Tibial artery (tissue), 4 donors: ENCODE measurements at regions of chr2 and their contacts with region 1.

Region 1: GRCh38 chr2:37920570-37920969 is 4.5 kb upstream of the RMDN2 start:
- DNase-seq: no peak
- H3K4me3 ChIP-seq: no peak overlapping the region
- H3K27ac ChIP-seq: no peak overlapping the region
- H3K4me1 ChIP-seq: peaks cover 0 to 17% (median 3%) of the 10 kb centered on the region in 4 donors
- H3K27me3 ChIP-seq: no peaks in the 10 kb centered on the region
- CTCF ChIP-seq: no peak

Region 2: GRCh38 chr2:37529830-37530415 is 390.6 kb before region 1 on chr2:
- intact Hi-C with region 1: no loop called
- DNase-seq: no peak
- H3K4me3 ChIP-seq: no peak overlapping the region
- H3K27ac ChIP-seq: no peak overlapping the region
- H3K4me1 ChIP-seq: peaks cover 0 to 13% (median 5%) of the 10 kb centered on the region in 4 donors
- H3K27me3 ChIP-seq: no peaks in the 10 kb centered on the region
- CTCF ChIP-seq: no peak

Region 3: GRCh38 chr2:37767956-37768925 is 152.3 kb before region 1 on chr2:
- intact Hi-C with region 1: no loop called
- DNase-seq: peak; percentile 70 to 74
- H3K4me3 ChIP-seq: no peak overlapping the region
- H3K27ac ChIP-seq: peak overlapping the region; percentile 74 to 85
- H3K4me1 ChIP-seq: peaks cover 0 to 51% (median 16%) of the 10 kb centered on the region in 4 donors
- H3K27me3 ChIP-seq: no peaks in the 10 kb centered on the region
- CTCF ChIP-seq: no peak

Region 4: DNA sequence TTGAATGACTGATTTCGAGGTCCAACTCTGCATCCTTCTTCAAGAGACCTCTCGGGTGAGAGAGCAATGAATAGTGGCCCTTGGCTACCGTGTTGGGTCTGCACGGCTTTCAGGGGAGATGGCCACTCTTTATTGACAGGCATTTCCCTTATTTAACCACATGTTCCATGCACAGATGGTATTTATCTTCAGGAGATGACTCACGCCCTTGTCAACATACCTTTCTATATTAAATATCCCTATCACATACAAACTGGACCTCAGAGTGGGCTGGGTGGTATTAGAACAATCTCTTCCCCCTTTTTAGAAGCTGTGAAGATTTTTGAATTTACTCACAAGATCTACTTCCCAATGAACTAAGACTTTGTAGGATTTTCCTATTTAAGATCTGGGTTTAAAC is 139.5 kb before region 1 on chr2:
- intact Hi-C with region 1: loop called (anchors 5 kb)
- DNase-seq: no peak
- H3K4me3 ChIP-seq: no peak overlapping the region
- H3K27ac ChIP-seq: peak overlapping the region; percentile 76 to 83
- H3K4me1 ChIP-seq: peaks cover 0 to 50% (median 26%) of the 10 kb centered on the region in 4 donors
- H3K27me3 ChIP-seq: no peaks in the 10 kb centered on the region
- CTCF ChIP-seq: no peak

Region 5: GRCh38 chr2:37877457-37878315 is 42.9 kb before region 1 on chr2:
- intact Hi-C with region 1: no loop called
- DNase-seq: no peak
- H3K4me3 ChIP-seq: no peak overlapping the region
- H3K27ac ChIP-seq: no peak overlapping the region
- H3K4me1 ChIP-seq: peaks cover 0 to 21% (median 1%) of the 10 kb centered on the region in 4 donors
- H3K27me3 ChIP-seq: no peaks in the 10 kb centered on the region
- CTCF ChIP-seq: peak; percentile 66 to 84

Region 6: DNA sequence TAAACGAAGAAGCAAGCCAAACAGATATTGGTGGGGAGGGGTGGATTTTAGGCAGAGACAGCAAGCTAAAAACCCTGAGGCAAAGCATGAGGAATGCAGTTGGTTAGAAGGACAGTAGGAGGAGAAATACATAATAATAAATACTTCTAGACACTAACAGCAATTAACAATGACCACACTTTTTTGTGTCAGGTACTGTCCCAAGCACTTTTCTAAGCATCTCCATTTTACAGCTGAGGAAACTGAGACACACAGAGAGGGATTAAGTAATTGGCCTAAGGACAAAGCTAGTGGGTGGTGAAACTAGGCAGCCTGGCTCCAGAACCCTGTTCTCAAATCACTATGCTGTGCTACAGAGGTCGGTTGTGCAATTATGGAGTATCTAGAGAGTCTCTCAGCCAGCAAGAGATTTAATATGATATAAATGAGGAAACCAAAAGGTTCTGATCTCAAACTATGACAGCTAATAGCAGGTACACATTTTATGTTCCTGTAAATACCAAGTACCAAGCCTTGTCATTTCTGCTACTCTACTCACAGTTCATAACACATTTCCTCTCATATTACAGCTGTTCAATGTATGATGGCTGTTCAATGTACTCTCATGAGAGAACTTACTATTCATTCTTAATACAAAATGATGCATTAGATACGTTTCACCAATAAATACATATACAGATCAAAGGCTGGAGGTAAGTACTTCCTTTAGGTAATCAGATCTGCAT is 1511.2 kb after region 1 on chr2:
- intact Hi-C with region 1: no loop called
- DNase-seq: no peak
- H3K4me3 ChIP-seq: no peak overlapping the region
- H3K27ac ChIP-seq: peak overlapping the region; percentile 20
- H3K4me1 ChIP-seq: peaks cover 0 to 70% (median 41%) of the 10 kb centered on the region in 4 donors
- H3K27me3 ChIP-seq: no peaks in the 10 kb centered on the region
- CTCF ChIP-seq: no peak